ENCODE measurements at regions of chr1 and their contacts with region 1.

Region 1: DNA sequence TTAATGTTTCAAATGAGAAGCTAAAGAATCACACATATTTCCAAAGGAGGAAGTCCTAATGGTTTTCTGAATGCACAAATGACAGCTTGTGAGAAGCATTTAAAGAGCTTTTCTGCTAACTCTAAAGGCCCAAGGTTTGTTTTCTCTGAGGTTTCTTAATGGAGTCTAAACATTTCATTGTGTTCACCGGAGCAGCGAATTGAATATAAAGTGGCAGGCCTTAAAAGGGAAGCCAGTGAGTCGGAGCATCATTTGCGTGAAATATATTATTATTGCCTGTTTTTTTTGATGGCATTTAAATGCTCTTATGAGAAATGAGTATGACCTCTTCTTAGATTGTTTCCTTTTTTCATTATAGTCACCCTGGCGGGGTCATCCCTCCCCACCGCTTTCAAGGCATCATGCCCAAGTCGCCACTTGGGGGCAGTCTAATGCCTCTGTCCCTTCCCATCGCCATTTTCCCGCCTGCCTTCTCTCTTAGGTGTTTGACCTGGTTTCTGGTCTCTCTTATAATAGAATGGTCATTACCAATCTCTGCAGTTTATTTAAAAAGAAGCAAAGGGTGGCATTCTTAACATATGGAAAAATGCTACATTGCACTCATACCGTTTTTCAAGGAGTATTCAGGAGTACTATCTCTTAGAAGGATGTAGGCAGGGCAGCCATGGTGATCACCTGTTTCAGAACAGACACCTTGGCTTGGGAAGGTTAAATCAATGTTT is 25.3 kb upstream of the OVAAL start:
- DNase-seq: peak; percentile 70
- ATAC-seq: peak; percentile 81 to 86

Region 2: GRCh38 chr1:180563026-180563827 is 29.8 kb after region 1 on chr1:
- intact Hi-C with region 1: no loop called
- DNase-seq: no peak
- ATAC-seq: peak; percentile 63 to 73

Region 3: DNA sequence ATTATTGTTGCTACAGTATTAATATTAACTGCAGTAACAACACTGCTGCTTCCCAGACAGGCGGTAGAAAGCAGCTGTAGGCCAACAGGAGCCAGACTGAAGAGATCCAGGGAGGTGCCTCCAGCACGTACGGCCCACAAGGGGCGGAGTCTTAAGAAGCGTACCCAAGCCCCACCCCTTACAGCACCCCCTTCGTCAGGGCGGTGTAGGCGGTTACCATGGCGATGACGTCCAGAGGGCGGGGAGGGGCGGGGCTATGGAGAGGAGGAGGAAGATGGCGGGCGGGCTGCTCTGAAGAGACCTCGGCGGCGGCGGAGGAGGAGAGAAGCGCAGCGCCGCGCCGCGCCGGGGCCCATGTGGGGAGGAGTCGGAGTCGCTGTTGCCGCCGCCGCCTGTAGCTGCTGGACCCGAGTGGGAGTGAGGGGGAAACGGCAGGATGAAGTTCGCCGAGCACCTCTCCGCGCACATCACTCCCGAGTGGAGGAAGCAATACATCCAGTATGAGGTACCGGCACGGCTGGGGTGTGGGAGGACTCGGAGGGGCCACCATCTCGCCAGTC is 98.4 kb after region 1 on chr1 and contains the start of gene XPR1:
- intact Hi-C with region 1: loop called (anchors 5 to 10 kb)
- DNase-seq: peak; percentile 98
- ATAC-seq: peak; percentile 99 to 100
- total RNA-seq, gene XPR1: 20.5 to 25.4 TPM

Measured in left cardiac atrium (tissue), 4 donors.